Heart right ventricle (tissue), 16 donors: ENCODE measurements at regions of chr10 and their contacts with region 1.

Region 1: GRCh38 chr10:114470956-114471905 is 66.9 kb upstream of the AFAP1L2 start:
- DNase-seq: peak; percentile 51 to 60
- ATAC-seq: peak; percentile 55 to 86 (median 78)
- H3K4me3 ChIP-seq: no peak overlapping the region
- H3K27ac ChIP-seq: peak overlapping the region in 5 of 10 donors; percentile 3 to 39 (median 24)
- H3K4me1 ChIP-seq: peaks cover 0 to 48% (median 17%) of the 10 kb centered on the region in 9 donors
- H3K27me3 ChIP-seq: no peaks in the 10 kb centered on the region
- CTCF ChIP-seq: peak; percentile 80 to 95 (median 93)

Region 2: DNA sequence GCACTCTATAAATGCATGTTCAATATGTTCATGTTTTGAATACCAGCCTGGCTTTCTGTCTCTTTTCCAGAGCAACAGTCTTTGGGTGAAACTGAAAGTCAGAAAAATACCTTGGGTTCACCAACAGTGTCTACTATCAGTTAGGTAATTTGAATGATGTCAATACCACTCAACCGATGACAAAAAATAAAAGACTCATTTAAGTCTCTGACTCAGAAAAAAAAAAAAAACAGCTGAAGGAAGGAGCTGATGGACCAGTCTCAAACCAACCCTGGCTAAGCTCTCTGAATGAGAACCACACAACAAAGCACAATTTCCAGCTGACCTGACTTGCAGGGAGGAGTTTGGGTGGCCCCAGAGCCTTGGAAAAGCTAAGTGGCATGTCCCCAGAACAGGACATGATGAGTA is 144.4 kb after region 1 on chr10:
- intact Hi-C with region 1: loop called in 1 of 10 experiments (anchors 5 kb)
- DNase-seq: no peak
- ATAC-seq: peak in 1 of 8 donors; percentile 12
- H3K4me3 ChIP-seq: no peak overlapping the region
- H3K27ac ChIP-seq: peak overlapping the region in 7 of 10 donors; percentile 2 to 64 (median 30)
- H3K4me1 ChIP-seq: peaks cover 22 to 98% (median 81%) of the 10 kb centered on the region in 9 donors
- H3K27me3 ChIP-seq: no peaks in the 10 kb centered on the region
- CTCF ChIP-seq: no peak

Region 3: DNA sequence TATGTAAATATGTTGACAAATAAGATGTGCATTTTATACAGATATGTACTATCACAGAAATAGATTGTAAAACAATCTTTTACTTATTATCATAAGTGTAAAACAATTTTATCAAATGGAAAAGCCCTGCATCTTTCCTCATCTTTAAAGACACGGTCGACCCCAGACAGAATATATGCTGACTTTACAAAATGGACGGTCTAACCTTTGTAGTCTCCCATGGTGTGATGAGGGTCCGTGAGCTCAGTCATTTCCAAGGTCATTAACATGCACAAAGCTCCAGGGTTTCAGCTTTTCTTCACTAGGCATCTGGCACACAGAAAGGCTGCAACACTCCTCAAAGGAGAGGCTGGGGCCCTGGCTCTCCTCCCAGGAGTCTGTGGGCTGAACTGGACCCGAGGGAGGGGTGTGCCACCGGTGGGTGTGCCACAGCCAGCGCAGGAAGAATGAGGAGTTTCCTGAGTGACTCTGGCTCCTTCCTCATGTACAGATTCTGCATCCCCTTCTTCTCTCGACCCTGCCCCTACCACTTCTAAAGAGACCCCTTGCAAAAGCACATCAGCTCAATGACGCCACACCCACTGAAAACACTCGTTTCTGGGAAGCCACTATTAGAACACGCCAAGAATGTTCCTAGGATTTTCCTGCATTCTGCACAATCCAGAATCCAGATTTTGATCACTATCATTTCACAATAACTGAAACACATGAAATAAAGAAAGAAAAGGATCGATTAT is 213.0 kb after region 1 on chr10:
- intact Hi-C with region 1: loop called in 1 of 10 experiments (anchors 10 kb)
- DNase-seq: peak; percentile 49 to 63
- ATAC-seq: peak; percentile 54 to 79 (median 66)
- H3K4me3 ChIP-seq: peak overlapping the region; percentile 15 to 62 (median 54)
- H3K27ac ChIP-seq: peak overlapping the region; percentile 75 to 95 (median 87)
- H3K4me1 ChIP-seq: peaks cover 19 to 92% (median 60%) of the 10 kb centered on the region in 9 donors
- H3K27me3 ChIP-seq: no peaks in the 10 kb centered on the region
- CTCF ChIP-seq: no peak

Region 4: GRCh38 chr10:114703377-114704107 is 232.3 kb after region 1 on chr10:
- intact Hi-C with region 1: loop called in 6 of 10 experiments (anchors 5 to 10 kb)
- DNase-seq: no peak
- ATAC-seq: peak in 7 of 8 donors; percentile 32 to 54 (median 42)
- H3K4me3 ChIP-seq: no peak overlapping the region
- H3K27ac ChIP-seq: peak overlapping the region in 2 of 10 donors; percentile 27 to 38
- H3K4me1 ChIP-seq: peaks cover 0 to 59% (median 26%) of the 10 kb centered on the region in 9 donors
- H3K27me3 ChIP-seq: no peaks in the 10 kb centered on the region
- CTCF ChIP-seq: peak; percentile 31 to 76 (median 62)

Region 5: DNA sequence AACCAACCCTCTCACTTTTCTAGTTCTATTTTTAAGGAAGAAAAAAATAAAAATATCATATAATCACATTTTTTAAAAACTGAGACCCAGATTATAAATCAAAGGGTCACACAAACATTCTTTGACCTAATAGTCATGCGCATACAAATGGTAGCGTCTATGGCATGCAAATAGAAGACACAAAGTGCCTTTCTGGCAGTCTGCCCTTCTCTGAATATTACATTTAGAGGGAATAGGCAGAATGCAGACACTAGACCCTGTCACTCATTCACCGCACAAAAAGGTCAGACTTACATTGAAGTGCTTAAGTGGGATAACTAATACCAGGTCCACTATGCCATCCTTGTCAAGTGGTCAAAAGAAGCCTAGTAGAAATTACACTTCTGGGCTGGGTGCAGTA is 323.8 kb after region 1 on chr10:
- intact Hi-C with region 1: loop called in 1 of 10 experiments (anchors 5 kb)
- DNase-seq: no peak
- ATAC-seq: no peak
- H3K4me3 ChIP-seq: no peak overlapping the region
- H3K27ac ChIP-seq: no peak overlapping the region
- H3K4me1 ChIP-seq: no peaks in the 10 kb centered on the region
- H3K27me3 ChIP-seq: no peaks in the 10 kb centered on the region
- CTCF ChIP-seq: no peak

Region 6: DNA sequence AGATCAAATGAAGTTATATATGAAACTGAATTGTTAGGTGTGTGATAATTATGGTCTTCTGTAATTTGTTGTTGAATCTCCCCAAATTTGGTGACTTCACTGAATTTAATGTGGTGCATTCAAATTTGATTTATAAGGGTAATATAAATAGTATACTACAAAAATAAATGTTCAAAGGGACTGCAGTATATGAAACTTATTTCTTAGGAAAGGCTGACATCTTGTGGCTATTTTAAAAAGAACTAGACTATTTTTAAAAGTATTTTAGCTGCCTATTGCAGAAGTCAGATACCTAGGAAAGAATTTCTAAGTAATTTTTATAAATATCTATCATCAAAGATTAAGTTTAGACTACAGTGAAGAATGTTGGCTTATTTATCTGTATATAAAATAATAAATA is 658.5 kb after region 1 on chr10:
- intact Hi-C with region 1: loop called in 1 of 10 experiments (anchors 5 kb)
- DNase-seq: no peak
- ATAC-seq: peak in 1 of 8 donors; percentile 42
- H3K4me3 ChIP-seq: no peak overlapping the region
- H3K27ac ChIP-seq: no peak overlapping the region
- H3K4me1 ChIP-seq: no peaks in the 10 kb centered on the region
- H3K27me3 ChIP-seq: no peaks in the 10 kb centered on the region
- CTCF ChIP-seq: peak in 7 of 9 donors; percentile 31 to 64 (median 49)